Activated T-helper 2 cell treated with anti-CD3 and anti-CD28 coated beads, Interferon-gamma antibody, Interleukin-2, Interleukin-4, amounts not matched to agents 10 μg/mL and 5 μg/mL and 100 μg/mL, durations not matched to agents 14 hours and 24 hours and 36 hours (primary cell): ENCODE measurements at regions of chr3 and their contacts with region 1.

Region 1: DNA sequence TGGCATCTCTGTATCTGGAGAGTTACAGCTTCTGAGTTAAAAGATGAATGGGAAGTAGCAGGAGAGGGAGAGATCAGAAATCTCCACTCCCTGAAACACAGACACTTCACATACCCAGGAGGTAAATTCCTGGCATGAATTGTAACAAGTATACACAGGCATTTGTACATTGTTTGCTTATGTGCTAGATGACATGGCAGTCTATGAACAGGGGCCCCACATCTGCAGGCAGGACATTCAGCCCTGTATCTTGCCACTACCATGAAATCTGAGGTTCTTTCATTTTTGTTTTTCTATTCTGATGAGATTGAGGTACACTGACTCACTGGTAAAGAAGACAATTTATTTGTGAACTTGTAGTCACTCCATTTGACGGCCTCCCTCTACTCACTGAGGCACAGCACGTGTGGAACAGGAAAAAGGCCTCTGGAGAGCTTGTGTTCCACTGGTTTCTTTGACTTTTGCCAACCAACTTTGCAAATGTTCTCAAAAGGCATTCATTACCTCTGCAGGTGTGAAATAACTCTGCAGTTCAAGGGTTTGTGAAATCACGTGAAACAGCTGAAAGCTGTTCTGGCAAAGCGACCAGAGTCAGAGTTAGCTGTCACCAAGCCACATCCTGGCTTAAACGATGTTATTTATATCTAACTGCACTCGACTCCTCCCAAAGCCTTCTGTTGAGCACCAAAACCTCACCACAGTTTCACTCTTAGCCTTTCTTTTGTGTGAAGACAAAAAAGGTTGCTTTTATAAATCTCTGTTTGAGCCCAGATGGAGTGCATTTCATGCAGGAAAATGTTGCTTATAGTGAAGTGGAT is 401.3 kb upstream of the CFAP20DC start:
- DNase-seq: peak; percentile 73
- H3K4me3 Mint-ChIP-seq: peak overlapping the region; percentile 34
- H3K27ac Mint-ChIP-seq: peak overlapping the region; percentile 85
- H3K4me1 Mint-ChIP-seq: peaks cover 61% of the 10 kb centered on the region
- H3K27me3 Mint-ChIP-seq: no peaks in the 10 kb centered on the region

Region 2: GRCh38 chr3:59313365-59313764 is 137.8 kb before region 1 on chr3:
- intact Hi-C with region 1: loop called (anchors 10 kb)
- DNase-seq: peak; percentile 15
- H3K4me3 Mint-ChIP-seq: no peak overlapping the region
- H3K27ac Mint-ChIP-seq: no peak overlapping the region
- H3K4me1 Mint-ChIP-seq: peaks cover 8% of the 10 kb centered on the region
- H3K27me3 Mint-ChIP-seq: peaks cover 3% of the 10 kb centered on the region

Region 3: DNA sequence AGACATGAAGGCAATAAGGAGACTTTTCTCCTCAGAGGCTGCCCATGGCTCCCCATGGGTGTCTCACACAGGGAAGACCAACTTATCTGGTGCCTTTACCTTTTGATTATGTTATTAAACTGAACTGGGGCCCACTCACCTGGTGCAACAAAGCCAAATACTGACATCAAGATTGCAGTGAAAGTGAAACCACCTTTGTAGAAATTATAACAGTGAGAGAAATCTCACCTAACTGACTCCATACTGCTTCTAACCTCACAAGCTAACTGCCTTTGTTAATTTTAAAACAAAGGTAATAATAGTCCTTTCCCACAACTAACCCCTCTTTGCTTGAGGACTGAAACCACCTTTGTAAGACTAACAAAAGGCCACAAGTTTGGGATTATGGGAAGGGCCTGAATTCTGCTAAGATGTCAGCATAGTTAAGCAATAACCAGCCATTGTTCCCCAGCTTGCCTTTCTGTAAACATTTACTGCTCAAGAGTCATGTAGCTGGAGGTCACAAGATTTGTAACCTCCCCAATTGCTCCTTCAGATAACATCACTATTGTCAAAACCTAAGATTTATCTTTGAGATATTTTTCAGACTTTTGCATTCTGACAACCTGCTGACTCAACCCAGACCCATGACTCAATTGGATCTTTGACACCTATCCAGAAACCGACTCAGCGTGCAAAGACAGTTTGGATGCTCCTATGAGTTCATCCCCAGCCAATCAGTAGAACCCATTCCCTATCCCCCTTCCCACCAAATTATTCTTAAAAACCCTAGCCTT is 19.0 kb after region 1 on chr3:
- intact Hi-C with region 1: loop called (anchors 1 kb)
- DNase-seq: peak; percentile 23
- H3K4me3 Mint-ChIP-seq: no peak overlapping the region
- H3K27ac Mint-ChIP-seq: peak overlapping the region; percentile 40
- H3K4me1 Mint-ChIP-seq: peaks cover 43% of the 10 kb centered on the region
- H3K27me3 Mint-ChIP-seq: no peaks in the 10 kb centered on the region

Region 4: GRCh38 chr3:59559721-59560435 is 108.7 kb after region 1 on chr3:
- intact Hi-C with region 1: loop called (anchors 2 kb)
- DNase-seq: no peak
- H3K4me3 Mint-ChIP-seq: no peak overlapping the region
- H3K27ac Mint-ChIP-seq: peak overlapping the region; percentile 56
- H3K4me1 Mint-ChIP-seq: peaks cover 20% of the 10 kb centered on the region
- H3K27me3 Mint-ChIP-seq: no peaks in the 10 kb centered on the region

Region 5: DNA sequence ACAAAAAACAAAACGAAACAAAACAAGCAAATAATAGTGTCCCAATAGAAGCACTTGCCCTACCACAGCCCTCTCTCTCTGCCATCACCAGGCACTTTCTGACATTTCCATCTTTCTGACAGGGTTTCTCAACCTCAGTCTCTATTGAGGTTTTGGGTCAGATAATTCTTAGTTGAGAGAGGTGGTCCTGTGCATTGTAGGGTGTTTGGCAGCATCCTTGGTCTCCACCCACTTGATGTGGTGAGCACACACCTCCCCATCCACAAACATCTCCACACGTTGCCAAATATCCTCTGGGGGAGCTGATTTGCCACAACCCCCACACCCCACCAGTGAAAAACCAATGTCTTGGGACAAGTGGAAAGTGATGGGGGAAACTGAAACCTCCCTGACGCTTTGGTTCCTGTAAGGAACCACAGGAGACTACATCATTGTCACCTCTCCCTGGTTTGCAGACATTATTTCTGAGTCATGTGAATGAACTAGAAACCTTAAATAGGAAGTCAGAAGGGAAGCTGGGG is 332.4 kb after region 1 on chr3:
- intact Hi-C with region 1: loop called (anchors 5 kb)
- DNase-seq: peak; percentile 18
- H3K4me3 Mint-ChIP-seq: no peak overlapping the region
- H3K27ac Mint-ChIP-seq: peak overlapping the region; percentile 43
- H3K4me1 Mint-ChIP-seq: peaks cover 39% of the 10 kb centered on the region
- H3K27me3 Mint-ChIP-seq: no peaks in the 10 kb centered on the region

Region 6: GRCh38 chr3:60010781-60011180 is 559.6 kb after region 1 on chr3:
- intact Hi-C with region 1: loop called (anchors 10 kb)
- DNase-seq: peak; percentile 72
- H3K4me3 Mint-ChIP-seq: peak overlapping the region; percentile 49
- H3K27ac Mint-ChIP-seq: peak overlapping the region; percentile 85
- H3K4me1 Mint-ChIP-seq: peaks cover 67% of the 10 kb centered on the region
- H3K27me3 Mint-ChIP-seq: no peaks in the 10 kb centered on the region